WTC11 (cell line): ENCODE measurements at regions of chr2 and their contacts with region 1.

Region 1: DNA sequence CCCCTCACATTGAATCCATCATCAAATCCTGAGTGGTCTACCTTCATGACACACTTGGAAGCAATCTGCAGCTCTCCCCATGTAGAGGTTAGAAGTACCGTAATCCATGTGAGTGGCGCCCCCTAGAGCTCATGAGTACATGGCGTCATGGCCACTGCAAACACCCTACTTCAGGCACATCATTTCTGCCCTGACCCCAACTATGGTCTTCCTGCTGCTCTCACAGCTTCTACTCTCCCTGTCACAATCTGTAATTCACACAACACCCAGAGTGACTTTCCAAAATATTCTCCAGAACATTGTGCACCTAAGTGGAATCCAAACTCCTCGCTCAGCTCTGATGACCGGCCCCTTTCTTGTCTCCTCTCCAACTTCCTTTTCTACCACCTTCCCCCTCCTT is 141.9 kb downstream of the ANKRD44 start:
- DNase-seq: peak; percentile 87
- ATAC-seq: peak; percentile 78
- H3K4me3 Mint-ChIP-seq: no peak overlapping the region
- H3K27ac Mint-ChIP-seq: no peak overlapping the region
- H3K4me1 Mint-ChIP-seq: peaks cover 7% of the 10 kb centered on the region
- H3K27me3 Mint-ChIP-seq: peaks cover 5% of the 10 kb centered on the region
- CTCF ChIP-seq: peak; percentile 86

Region 2: GRCh38 chr2:197075759-197076337 is 92.9 kb before region 1 on chr2:
- CTCF ChIA-PET with region 1: interaction called, 14 read pairs
- POLR2A ChIA-PET with region 1: no interaction called
- DNase-seq: peak; percentile 26
- ATAC-seq: peak; percentile 65; the same call in 1 of the 2 replicates
- H3K4me3 Mint-ChIP-seq: no peak overlapping the region
- H3K27ac Mint-ChIP-seq: no peak overlapping the region
- H3K4me1 Mint-ChIP-seq: peaks cover 6% of the 10 kb centered on the region
- H3K27me3 Mint-ChIP-seq: no peaks in the 10 kb centered on the region; the same call in 1 of the 2 replicates
- CTCF ChIP-seq: peak; percentile 56

Region 3: GRCh38 chr2:197137231-197137630 is 31.5 kb before region 1 on chr2:
- CTCF ChIA-PET with region 1: interaction called, 12 read pairs
- POLR2A ChIA-PET with region 1: interaction called, 3 read pairs
- DNase-seq: no peak
- ATAC-seq: no peak
- H3K4me3 Mint-ChIP-seq: no peak overlapping the region
- H3K27ac Mint-ChIP-seq: no peak overlapping the region
- H3K4me1 Mint-ChIP-seq: peaks cover 6% of the 10 kb centered on the region; the same call in 1 of the 2 replicates
- H3K27me3 Mint-ChIP-seq: no peaks in the 10 kb centered on the region
- CTCF ChIP-seq: no peak

Region 4: GRCh38 chr2:197152451-197153228 is 16.1 kb before region 1 on chr2:
- CTCF ChIA-PET with region 1: interaction called, 13 read pairs
- POLR2A ChIA-PET with region 1: no interaction called
- DNase-seq: no peak
- ATAC-seq: peak; percentile 73
- H3K4me3 Mint-ChIP-seq: no peak overlapping the region
- H3K27ac Mint-ChIP-seq: no peak overlapping the region
- H3K4me1 Mint-ChIP-seq: peaks cover 8% of the 10 kb centered on the region
- H3K27me3 Mint-ChIP-seq: no peaks in the 10 kb centered on the region
- CTCF ChIP-seq: no peak